Mammary epithelial cell (primary cell): ENCODE measurements at regions of chr21 and their contacts with region 1.

Region 1: GRCh38 chr21:45747802-45748445 is 104.4 kb downstream of the PCBP3 start:
- DNase-seq: peak; percentile 77
- H3K4me3 ChIP-seq: no peak overlapping the region
- H3K27ac ChIP-seq: no peak overlapping the region
- H3K4me1 ChIP-seq: peaks cover 12% of the 10 kb centered on the region
- H3K27me3 ChIP-seq: peaks cover 4% of the 10 kb centered on the region
- CTCF ChIP-seq: peak; percentile 3 to 29

Region 2: GRCh38 chr21:45655124-45655523 is 92.8 kb before region 1 on chr21:
- CTCF ChIA-PET with region 1: no interaction called
- dilution Hi-C with region 1: no loop called
- in situ Hi-C with region 1: no loop called
- intact Hi-C with region 1: loop called (anchors 10 kb)
- DNase-seq: no peak
- H3K4me3 ChIP-seq: no peak overlapping the region
- H3K27ac ChIP-seq: no peak overlapping the region
- H3K4me1 ChIP-seq: no peaks in the 10 kb centered on the region
- H3K27me3 ChIP-seq: no peaks in the 10 kb centered on the region
- CTCF ChIP-seq: no peak